ENCODE measurements at regions of chr1 and their contacts with region 1.

Region 1: GRCh38 chr1:172870901-172871606 is 179.7 kb downstream of the TNFSF18 start:
- DNase-seq: no peak
- H3K4me3 Mint-ChIP-seq: no peak overlapping the region
- H3K27ac Mint-ChIP-seq: no peak overlapping the region
- H3K4me1 Mint-ChIP-seq: peaks cover 37% of the 10 kb centered on the region
- H3K27me3 Mint-ChIP-seq: peaks cover 13% of the 10 kb centered on the region

Region 2: GRCh38 chr1:172845371-172845770 is 25.7 kb before region 1 on chr1:
- CTCF ChIA-PET with region 1: no interaction called
- POLR2A ChIA-PET with region 1: no interaction called
- intact Hi-C with region 1: loop called (anchors 1 kb)
- DNase-seq: peak; percentile 90
- H3K4me3 Mint-ChIP-seq: no peak overlapping the region
- H3K27ac Mint-ChIP-seq: no peak overlapping the region
- H3K4me1 Mint-ChIP-seq: peaks cover 22% of the 10 kb centered on the region
- H3K27me3 Mint-ChIP-seq: peaks cover 35% of the 10 kb centered on the region